ENCODE measurements at regions of chr15 and their contacts with region 1.

Region 1: DNA sequence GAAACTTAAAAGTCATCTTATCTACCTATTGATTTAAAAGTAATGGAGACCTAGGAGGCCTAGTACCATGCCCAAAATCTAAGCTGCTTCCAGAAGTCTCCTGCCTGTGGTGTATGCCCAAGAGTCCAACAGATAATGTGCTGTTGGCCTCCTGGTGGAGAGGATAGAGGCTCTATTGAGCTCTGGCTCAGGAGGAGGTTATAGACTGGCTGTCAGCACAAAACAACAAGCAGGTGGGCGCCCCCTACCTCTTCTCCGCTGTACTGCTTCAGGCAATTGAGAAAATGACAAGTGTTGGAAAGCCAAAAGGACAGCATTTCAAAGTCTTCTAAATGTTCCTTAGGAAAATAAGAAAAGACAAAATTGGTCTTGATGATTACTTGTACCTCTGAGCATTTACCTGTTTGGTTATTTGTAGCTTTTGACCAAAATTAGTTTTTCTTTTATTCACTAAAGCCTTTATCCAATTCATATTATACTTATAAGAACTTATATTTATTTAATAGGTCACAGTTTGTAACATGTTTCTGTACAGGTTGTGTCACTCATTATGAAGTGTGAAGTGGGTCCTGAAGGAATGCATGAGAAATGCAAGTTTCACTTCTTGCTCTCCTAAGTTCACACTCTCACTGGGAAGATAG is 17.2 kb upstream of the GNB5 start:
- DNase-seq: peak; percentile 88
- H3K4me3 Mint-ChIP-seq: no peak overlapping the region
- H3K27ac Mint-ChIP-seq: no peak overlapping the region
- H3K4me1 Mint-ChIP-seq: peaks cover 2% of the 10 kb centered on the region
- H3K27me3 Mint-ChIP-seq: peaks cover 12% of the 10 kb centered on the region

Region 2: DNA sequence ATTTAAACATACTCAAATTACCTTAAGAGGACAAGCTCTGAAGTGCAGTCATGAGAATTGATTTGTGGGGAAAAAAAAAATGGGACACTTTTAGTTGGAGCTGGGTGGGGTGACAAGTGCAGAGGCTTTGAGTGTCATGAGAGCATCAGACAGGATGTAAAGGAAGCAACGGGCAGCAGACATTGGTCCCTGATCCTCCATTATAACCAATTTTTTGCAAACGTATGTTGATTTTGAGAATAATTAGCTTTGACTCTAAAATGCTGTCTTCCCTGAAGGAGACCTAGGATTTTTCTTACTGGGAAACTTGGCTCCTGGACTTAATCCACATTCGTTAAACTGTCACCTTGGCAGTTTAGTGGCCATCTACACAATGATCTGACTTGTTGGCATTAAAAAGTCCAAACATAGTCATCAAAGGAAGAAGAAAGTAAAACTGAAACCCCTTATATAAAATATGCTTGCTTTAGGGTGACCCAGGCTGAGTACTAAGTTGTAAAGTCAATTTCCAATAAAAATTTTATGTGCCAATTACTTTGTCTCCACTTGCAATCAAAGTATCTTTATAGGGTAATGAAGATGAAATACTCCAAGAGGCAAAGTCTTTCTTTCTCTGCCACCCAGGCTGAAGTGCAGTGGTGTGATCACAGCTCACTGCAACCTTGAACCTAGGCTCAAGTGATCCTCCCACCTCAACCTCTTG is 141.4 kb before region 1 on chr15:
- CTCF ChIA-PET with region 1: no interaction called
- DNase-seq: no peak
- H3K4me3 Mint-ChIP-seq: no peak overlapping the region
- H3K27ac Mint-ChIP-seq: peak overlapping the region; percentile 70
- H3K4me1 Mint-ChIP-seq: peaks cover 17% of the 10 kb centered on the region
- H3K27me3 Mint-ChIP-seq: peaks cover 5% of the 10 kb centered on the region

Region 3: GRCh38 chr15:52154896-52155865 is 53.2 kb before region 1 on chr15:
- CTCF ChIA-PET with region 1: interaction called, 10 read pairs
- DNase-seq: no peak
- H3K4me3 Mint-ChIP-seq: no peak overlapping the region
- H3K27ac Mint-ChIP-seq: no peak overlapping the region
- H3K4me1 Mint-ChIP-seq: no peaks in the 10 kb centered on the region
- H3K27me3 Mint-ChIP-seq: no peaks in the 10 kb centered on the region

Region 4: GRCh38 chr15:52163321-52164190 is 44.9 kb before region 1 on chr15:
- CTCF ChIA-PET with region 1: interaction called, 13 read pairs
- DNase-seq: peak; percentile 33
- H3K4me3 Mint-ChIP-seq: no peak overlapping the region
- H3K27ac Mint-ChIP-seq: no peak overlapping the region
- H3K4me1 Mint-ChIP-seq: peaks cover 10% of the 10 kb centered on the region
- H3K27me3 Mint-ChIP-seq: no peaks in the 10 kb centered on the region

Region 5: DNA sequence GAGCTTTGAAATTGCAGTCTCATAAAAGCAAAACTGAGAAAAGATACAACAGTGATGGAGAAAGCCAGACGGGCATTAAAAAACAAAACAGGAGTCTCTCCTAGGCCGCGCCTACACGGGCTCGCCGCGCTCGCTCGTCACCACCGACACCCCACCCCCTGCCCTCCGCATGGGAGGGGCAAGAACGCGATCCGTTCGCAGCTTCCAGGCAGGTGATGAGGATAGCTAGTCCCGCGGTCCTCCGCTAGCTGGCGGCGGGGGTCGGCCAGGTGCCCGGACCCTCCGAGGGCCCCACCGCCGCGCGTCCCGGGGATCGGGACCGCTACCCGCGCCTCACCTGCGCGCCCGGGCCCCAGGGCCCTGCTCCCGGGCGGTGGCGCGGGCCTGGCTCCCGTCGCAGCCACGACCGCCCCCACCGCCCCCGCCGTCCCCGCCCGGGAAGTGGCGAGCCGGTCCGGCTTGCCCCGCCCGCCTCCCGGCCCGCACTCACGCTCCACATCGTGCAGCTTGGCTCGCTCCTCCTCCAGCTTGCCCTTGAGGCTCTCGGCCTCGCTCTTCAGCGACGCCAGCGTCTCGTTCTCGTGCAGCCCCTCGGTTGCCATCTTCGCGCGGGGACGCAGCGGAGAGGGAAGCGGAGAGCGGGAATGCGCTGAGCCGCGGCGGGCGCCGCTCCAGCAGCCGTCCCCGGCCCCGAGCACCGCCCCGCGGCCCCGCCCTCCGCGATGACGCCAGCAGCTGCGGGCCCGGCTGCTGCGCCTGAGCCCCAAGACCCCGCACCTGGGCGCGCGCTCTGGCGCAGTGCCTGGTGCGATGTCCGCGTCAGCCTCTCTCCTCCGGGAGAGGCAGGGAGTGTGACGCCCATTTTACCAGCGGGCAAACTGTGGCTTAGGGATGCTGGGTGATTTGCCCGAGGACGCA is 28.9 kb before region 1 on chr15:
- CTCF ChIA-PET with region 1: interaction called, 40 read pairs
- DNase-seq: peak; percentile 94
- H3K4me3 Mint-ChIP-seq: peak overlapping the region; percentile 94
- H3K27ac Mint-ChIP-seq: peak overlapping the region; percentile 98
- H3K4me1 Mint-ChIP-seq: peaks cover 39% of the 10 kb centered on the region
- H3K27me3 Mint-ChIP-seq: no peaks in the 10 kb centered on the region

Region 6: GRCh38 chr15:52193791-52194190 is 14.6 kb before region 1 on chr15:
- CTCF ChIA-PET with region 1: interaction called, 13 read pairs
- DNase-seq: no peak
- H3K4me3 Mint-ChIP-seq: no peak overlapping the region
- H3K27ac Mint-ChIP-seq: no peak overlapping the region
- H3K4me1 Mint-ChIP-seq: no peaks in the 10 kb centered on the region
- H3K27me3 Mint-ChIP-seq: peaks cover 3% of the 10 kb centered on the region

Region 7: DNA sequence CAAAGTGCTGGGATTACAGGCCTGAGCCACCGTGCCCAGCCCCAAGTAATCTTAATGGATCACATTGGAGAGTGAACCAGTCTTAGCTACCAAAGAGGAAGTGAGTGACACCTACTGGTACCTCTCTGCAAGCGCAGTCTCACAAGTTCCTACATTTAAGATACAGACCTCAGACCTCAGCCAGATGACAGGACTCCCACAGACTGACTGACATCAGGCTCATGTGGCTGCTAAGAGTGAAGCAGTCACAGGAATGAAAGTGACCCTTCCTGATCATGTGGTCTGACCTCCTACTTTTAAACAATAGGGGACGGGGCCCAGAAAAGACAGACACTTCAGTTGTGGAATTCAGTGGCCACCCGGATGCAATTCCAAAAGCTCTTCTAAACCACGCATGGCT is 19.0 kb after region 1 on chr15:
- CTCF ChIA-PET with region 1: interaction called, 12 read pairs
- DNase-seq: peak; percentile 82
- H3K4me3 Mint-ChIP-seq: no peak overlapping the region
- H3K27ac Mint-ChIP-seq: no peak overlapping the region
- H3K4me1 Mint-ChIP-seq: peaks cover 30% of the 10 kb centered on the region
- H3K27me3 Mint-ChIP-seq: no peaks in the 10 kb centered on the region